ENCODE measurements at regions of chr1 and their contacts with region 1.

Region 1: GRCh38 chr1:169546087-169546995 is 39.9 kb downstream of the F5 start:
- DNase-seq: peak; percentile 74
- H3K4me3 Mint-ChIP-seq: no peak overlapping the region
- H3K27ac Mint-ChIP-seq: no peak overlapping the region
- H3K4me1 Mint-ChIP-seq: peaks cover 12% of the 10 kb centered on the region
- H3K27me3 Mint-ChIP-seq: no peaks in the 10 kb centered on the region
- CTCF ChIP-seq: peak; percentile 71

Region 2: GRCh38 chr1:168466092-168466713 is 1080.1 kb before region 1 on chr1:
- CTCF ChIA-PET with region 1: no interaction called
- intact Hi-C with region 1: no loop called
- DNase-seq: peak; percentile 50
- H3K4me3 Mint-ChIP-seq: no peak overlapping the region
- H3K27ac Mint-ChIP-seq: peak overlapping the region; percentile 5
- H3K4me1 Mint-ChIP-seq: peaks cover 58% of the 10 kb centered on the region
- H3K27me3 Mint-ChIP-seq: no peaks in the 10 kb centered on the region
- CTCF ChIP-seq: no peak

Region 3: DNA sequence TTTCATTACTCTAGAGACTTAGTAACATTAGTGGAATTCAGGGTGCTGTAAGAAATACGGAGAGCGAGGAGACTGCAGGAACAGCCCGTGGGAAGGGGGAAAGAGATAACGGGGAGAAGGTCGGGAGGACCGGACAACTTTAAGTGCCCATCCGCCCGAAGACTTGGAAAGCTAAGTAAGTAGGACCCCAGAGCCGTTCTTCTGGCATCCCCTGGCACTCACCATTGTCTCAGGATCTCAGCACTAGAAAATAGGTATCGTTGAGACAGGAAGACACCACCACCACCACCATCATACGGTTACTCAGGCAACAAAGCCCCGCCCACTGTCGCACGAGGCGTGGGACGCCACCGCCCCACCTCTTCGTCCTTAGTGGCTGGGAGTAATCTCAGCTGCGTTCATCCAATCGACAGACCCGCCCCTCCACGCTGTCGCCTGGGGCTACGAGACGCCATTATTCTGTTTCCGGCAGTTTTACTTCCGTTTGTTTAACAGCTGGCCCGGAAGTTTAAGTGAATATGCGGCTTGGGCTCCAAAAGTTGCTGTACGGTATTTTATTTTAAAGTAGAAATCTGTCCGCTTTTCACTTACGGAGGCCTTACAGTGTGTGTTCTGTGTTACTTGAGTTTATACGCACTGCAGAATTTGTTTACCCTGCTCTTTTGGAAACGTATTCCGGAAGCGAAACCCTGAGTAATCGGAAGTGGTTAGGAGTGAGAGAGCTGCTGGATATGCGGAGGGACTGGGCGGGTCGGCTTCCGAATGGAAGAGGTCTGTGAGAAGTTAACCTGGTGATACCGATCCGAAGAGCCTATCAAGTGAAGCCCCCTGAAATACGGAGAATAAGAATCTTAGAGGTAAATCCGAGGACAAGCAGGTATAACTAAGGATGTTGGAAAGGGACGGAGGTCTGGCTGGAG is 178.6 kb before region 1 on chr1 and contains the starts of genes BLZF1 and NME7:
- CTCF ChIA-PET with region 1: interaction called, 3 read pairs
- intact Hi-C with region 1: loop called (anchors 5 kb)
- DNase-seq: peak; percentile 98
- H3K4me3 Mint-ChIP-seq: no peak within 1 kb of the TSS
- H3K27ac Mint-ChIP-seq: no peak within 1 kb of the TSS
- H3K4me1 Mint-ChIP-seq: peaks cover 20% of the 10 kb centered on the region
- H3K27me3 Mint-ChIP-seq: no peaks in the 10 kb centered on the region
- CTCF ChIP-seq: no peak
- total RNA-seq, gene BLZF1: 45.7 and 55.5 TPM in 2 replicates
- total RNA-seq, gene NME7: 25.2 and 33.2 TPM in 2 replicates

Region 4: DNA sequence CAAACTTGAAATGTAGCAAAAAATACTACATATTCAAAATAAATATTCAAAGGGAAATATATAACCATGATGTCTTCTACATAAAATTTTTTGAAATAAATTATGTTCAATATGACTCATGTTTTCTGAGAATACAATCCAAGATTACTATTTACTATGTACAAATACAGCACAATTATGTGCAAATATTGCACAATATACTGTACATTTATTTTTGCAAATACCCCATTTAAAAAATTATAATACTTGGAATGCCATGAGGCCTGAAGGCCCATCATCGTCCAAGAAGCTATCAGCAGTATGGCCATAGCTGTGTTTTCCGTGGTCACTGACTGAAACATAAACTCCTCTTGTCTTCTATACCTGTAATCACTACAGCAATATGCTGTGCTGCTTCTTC is 131.4 kb before region 1 on chr1:
- CTCF ChIA-PET with region 1: no interaction called
- intact Hi-C with region 1: no loop called
- DNase-seq: no peak
- H3K4me3 Mint-ChIP-seq: no peak overlapping the region
- H3K27ac Mint-ChIP-seq: no peak overlapping the region
- H3K4me1 Mint-ChIP-seq: no peaks in the 10 kb centered on the region
- H3K27me3 Mint-ChIP-seq: no peaks in the 10 kb centered on the region
- CTCF ChIP-seq: no peak

Region 5: DNA sequence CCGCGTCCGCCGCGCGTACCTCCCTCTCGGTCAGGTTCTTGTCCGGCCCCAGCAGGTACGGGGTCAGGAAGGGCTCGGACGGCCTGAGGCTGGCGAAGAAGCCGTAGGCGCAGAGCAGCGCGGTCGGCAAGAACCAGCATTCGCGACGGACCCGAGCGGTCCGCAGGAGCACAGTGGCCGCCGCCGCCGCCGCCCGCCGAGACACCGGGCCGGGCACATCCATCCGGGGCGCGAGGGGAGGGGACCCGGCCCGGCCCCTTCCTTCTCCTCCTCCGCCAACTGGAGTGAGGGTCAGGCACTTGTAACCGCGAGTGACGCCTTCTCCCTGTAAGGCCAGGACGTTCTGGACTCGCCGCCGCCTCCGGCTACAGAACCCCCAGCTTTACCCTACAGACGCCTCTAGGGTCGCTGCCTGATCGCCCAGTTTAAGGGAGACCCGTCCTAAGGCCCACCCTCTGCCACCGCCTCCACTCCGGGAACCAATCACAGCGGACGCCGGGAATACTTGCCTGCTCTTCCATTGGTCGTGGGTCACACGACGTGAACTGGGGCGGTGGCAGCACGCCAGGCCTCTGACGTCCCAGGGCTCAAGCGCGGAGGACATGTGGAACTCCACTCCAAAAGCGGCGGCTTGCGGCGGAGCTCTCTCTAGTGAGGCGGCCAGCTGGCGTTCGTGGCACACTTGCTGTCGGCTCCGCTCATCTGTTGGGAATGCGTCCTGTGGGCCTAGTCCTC is 60.6 kb before region 1 on chr1 and contains the start of gene SLC19A2:
- CTCF ChIA-PET with region 1: interaction called, 15 read pairs
- intact Hi-C with region 1: loop called (anchors 1 kb)
- DNase-seq: peak; percentile 99
- H3K4me3 Mint-ChIP-seq: peak within 1 kb of the TSS; percentile 87
- H3K27ac Mint-ChIP-seq: peak within 1 kb of the TSS; percentile 99
- H3K4me1 Mint-ChIP-seq: peaks cover 62% of the 10 kb centered on the region
- H3K27me3 Mint-ChIP-seq: no peaks in the 10 kb centered on the region
- CTCF ChIP-seq: peak; percentile 49
- total RNA-seq, gene SLC19A2: 22.0 and 24.2 TPM in 2 replicates

Region 6: GRCh38 chr1:169711469-169712281 is 165.3 kb after region 1 on chr1 and contains the start of gene SELL:
- CTCF ChIA-PET with region 1: interaction called, 3 read pairs
- intact Hi-C with region 1: loop called (anchors 1 kb)
- DNase-seq: peak; percentile 84
- H3K4me3 Mint-ChIP-seq: peak within 1 kb of the TSS; percentile 41
- H3K27ac Mint-ChIP-seq: peak within 1 kb of the TSS; percentile 19
- H3K4me1 Mint-ChIP-seq: peaks cover 10% of the 10 kb centered on the region
- H3K27me3 Mint-ChIP-seq: peaks cover 11% of the 10 kb centered on the region
- CTCF ChIP-seq: peak; percentile 85
- total RNA-seq, gene SELL: 6.2 and 12.1 TPM in 2 replicates

Measured in Calu3 (cell line).